ENCODE measurements at regions of chr19 and their contacts with region 1.

Region 1: GRCh38 chr19:1884719-1885334 is 469 bp downstream of the ABHD17A start:
- DNase-seq: no peak
- ATAC-seq: no peak
- H3K4me3 ChIP-seq: peak overlapping the region; percentile 73
- H3K4me3 Mint-ChIP-seq: peak overlapping the region; percentile 92 to 100 (median 99)
- H3K27ac ChIP-seq: peak overlapping the region; percentile 86
- H3K27ac Mint-ChIP-seq: peak overlapping the region; percentile 96 to 100 (median 98)
- H3K4me1 ChIP-seq: peaks cover 22 to 31% of the 10 kb centered on the region in 2 donors
- H3K4me1 Mint-ChIP-seq: peaks cover 21 to 38% (median 33%) of the 10 kb centered on the region in 7 donors
- H3K27me3 ChIP-seq: no peaks in the 10 kb centered on the region
- H3K27me3 Mint-ChIP-seq: no peaks in the 10 kb centered on the region

Region 2: GRCh38 chr19:1848399-1849131 is 36.3 kb before region 1 on chr19 and contains the start of gene REXO1:
- CTCF ChIA-PET with region 1: no interaction called
- POLR2A ChIA-PET with region 1: no interaction called
- intact Hi-C with region 1: loop called in 1 of 2 experiments (anchors 1 kb)
- DNase-seq: peak; percentile 96 to 100 (median 98)
- ATAC-seq: peak; percentile 90
- H3K4me3 ChIP-seq: peak within 1 kb of the TSS; percentile 85
- H3K4me3 Mint-ChIP-seq: peak within 1 kb of the TSS; percentile 83 to 95 (median 91)
- H3K27ac ChIP-seq: peak within 1 kb of the TSS; percentile 99
- H3K27ac Mint-ChIP-seq: peak within 1 kb of the TSS; percentile 85 to 95 (median 93)
- H3K4me1 ChIP-seq: peaks cover 30 to 67% of the 10 kb centered on the region in 2 donors
- H3K4me1 Mint-ChIP-seq: peaks cover 36 to 72% (median 52%) of the 10 kb centered on the region in 7 donors
- H3K27me3 ChIP-seq: no peaks in the 10 kb centered on the region
- H3K27me3 Mint-ChIP-seq: no peaks in the 10 kb centered on the region
- total RNA-seq, gene REXO1: 52.7 to 92.6 (median 73.1) TPM

Region 3: DNA sequence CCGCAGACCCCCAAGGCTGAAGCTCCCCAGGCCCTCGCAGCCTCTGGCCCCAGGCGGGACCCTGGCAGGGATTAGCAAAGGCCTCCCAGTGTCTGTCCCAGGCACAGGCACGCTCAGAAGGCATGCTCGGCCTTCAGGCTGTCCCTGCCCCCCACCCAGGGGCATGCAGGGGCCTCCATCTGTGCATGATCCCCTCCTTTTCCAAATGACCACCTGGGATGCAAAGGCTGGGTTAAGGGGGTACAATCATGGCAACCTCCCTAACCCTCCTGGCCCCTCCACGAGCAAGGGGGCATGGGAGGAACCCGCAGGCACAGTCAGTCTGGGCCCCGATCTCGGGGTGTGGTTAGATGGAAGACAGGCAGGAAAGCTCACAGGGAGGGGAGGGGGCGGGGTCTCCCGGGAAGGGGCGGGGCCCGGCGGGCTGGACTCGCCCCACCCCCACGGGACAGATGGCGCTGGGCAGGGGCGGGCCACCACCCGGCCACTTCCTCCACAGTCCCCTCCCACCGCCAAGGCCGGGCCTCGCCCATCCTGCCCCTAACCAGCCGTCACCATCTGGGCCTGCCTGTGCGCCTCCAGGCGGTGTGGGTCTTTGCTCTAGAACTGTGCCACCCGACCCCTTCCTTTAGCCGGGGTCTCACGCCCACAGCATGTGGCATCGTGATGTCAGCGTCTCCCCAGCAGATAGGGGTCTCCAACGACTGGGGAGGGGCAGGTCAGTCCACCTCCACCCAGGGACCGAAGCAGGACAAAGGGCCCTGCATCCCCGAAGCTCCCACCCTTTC is 29.6 kb before region 1 on chr19:
- CTCF ChIA-PET with region 1: no interaction called
- POLR2A ChIA-PET with region 1: interaction called, 14 read pairs
- intact Hi-C with region 1: no loop called
- DNase-seq: peak; percentile 58 to 89 (median 73)
- ATAC-seq: peak; percentile 78
- H3K4me3 ChIP-seq: peak overlapping the region; percentile 84
- H3K4me3 Mint-ChIP-seq: peak overlapping the region; percentile 79 to 91 (median 87)
- H3K27ac ChIP-seq: peak overlapping the region; percentile 93
- H3K27ac Mint-ChIP-seq: peak overlapping the region; percentile 82 to 96 (median 91)
- H3K4me1 ChIP-seq: peaks cover 28 to 76% of the 10 kb centered on the region in 2 donors
- H3K4me1 Mint-ChIP-seq: peaks cover 11 to 66% (median 51%) of the 10 kb centered on the region in 7 donors
- H3K27me3 ChIP-seq: no peaks in the 10 kb centered on the region
- H3K27me3 Mint-ChIP-seq: no peaks in the 10 kb centered on the region

Region 4: GRCh38 chr19:1896508-1896907 is 11.7 kb after region 1 on chr19:
- CTCF ChIA-PET with region 1: interaction called, 4 read pairs
- POLR2A ChIA-PET with region 1: interaction called, 57 read pairs
- intact Hi-C with region 1: loop called (anchors 1 kb)
- DNase-seq: no peak
- ATAC-seq: no peak
- H3K4me3 ChIP-seq: peak overlapping the region; percentile 13
- H3K4me3 Mint-ChIP-seq: peak overlapping the region; percentile 82 to 93 (median 88)
- H3K27ac ChIP-seq: peak overlapping the region; percentile 65
- H3K27ac Mint-ChIP-seq: peak overlapping the region in 7 of 9 donors; percentile 70 to 99 (median 97)
- H3K4me1 ChIP-seq: peaks cover 16 to 29% of the 10 kb centered on the region in 2 donors
- H3K4me1 Mint-ChIP-seq: peaks cover 10 to 46% (median 32%) of the 10 kb centered on the region in 7 donors
- H3K27me3 ChIP-seq: no peaks in the 10 kb centered on the region
- H3K27me3 Mint-ChIP-seq: no peaks in the 10 kb centered on the region

Region 5: GRCh38 chr19:1905071-1905862 is 20.4 kb after region 1 on chr19 and contains the starts of genes ADAT3 and SCAMP4:
- CTCF ChIA-PET with region 1: no interaction called
- POLR2A ChIA-PET with region 1: interaction called, 8 read pairs
- intact Hi-C with region 1: loop called (anchors 1 kb)
- DNase-seq: peak; percentile 90 to 98 (median 97)
- ATAC-seq: peak; percentile 98
- H3K4me3 ChIP-seq: peak within 1 kb of the TSS; percentile 70
- H3K4me3 Mint-ChIP-seq: peak within 1 kb of the TSS; percentile 88 to 96 (median 92)
- H3K27ac ChIP-seq: peak within 1 kb of the TSS; percentile 75
- H3K27ac Mint-ChIP-seq: peak within 1 kb of the TSS; percentile 67 to 96 (median 92)
- H3K4me1 ChIP-seq: peaks cover 10% of the 10 kb centered on the region in 2 donors
- H3K4me1 Mint-ChIP-seq: peaks cover 13 to 57% (median 39%) of the 10 kb centered on the region in 7 donors
- H3K27me3 ChIP-seq: no peaks in the 10 kb centered on the region
- H3K27me3 Mint-ChIP-seq: no peaks in the 10 kb centered on the region
- total RNA-seq, gene ADAT3: 3.5 to 13.5 (median 6.1) TPM
- total RNA-seq, gene SCAMP4: 17.6 to 35.5 (median 23.0) TPM

Region 6: GRCh38 chr19:2061495-2062381 is 176.9 kb after region 1 on chr19:
- CTCF ChIA-PET with region 1: no interaction called
- POLR2A ChIA-PET with region 1: no interaction called
- intact Hi-C with region 1: loop called in 1 of 2 experiments (anchors 1 kb)
- DNase-seq: peak; percentile 99 to 100 (median 100)
- ATAC-seq: peak; percentile 94
- H3K4me3 ChIP-seq: peak overlapping the region; percentile 72
- H3K4me3 Mint-ChIP-seq: peak overlapping the region; percentile 91 to 97 (median 94)
- H3K27ac ChIP-seq: peak overlapping the region; percentile 99
- H3K27ac Mint-ChIP-seq: peak overlapping the region; percentile 85 to 99 (median 97)
- H3K4me1 ChIP-seq: peaks cover 32 to 49% of the 10 kb centered on the region in 2 donors
- H3K4me1 Mint-ChIP-seq: peaks cover 20 to 60% (median 24%) of the 10 kb centered on the region in 7 donors
- H3K27me3 ChIP-seq: no peaks in the 10 kb centered on the region
- H3K27me3 Mint-ChIP-seq: no peaks in the 10 kb centered on the region

Measured in naive thymus-derived CD4-positive, alpha-beta T cell (primary cell).